ENCODE measurements at regions of chr7 and their contacts with region 1.

Region 1: DNA sequence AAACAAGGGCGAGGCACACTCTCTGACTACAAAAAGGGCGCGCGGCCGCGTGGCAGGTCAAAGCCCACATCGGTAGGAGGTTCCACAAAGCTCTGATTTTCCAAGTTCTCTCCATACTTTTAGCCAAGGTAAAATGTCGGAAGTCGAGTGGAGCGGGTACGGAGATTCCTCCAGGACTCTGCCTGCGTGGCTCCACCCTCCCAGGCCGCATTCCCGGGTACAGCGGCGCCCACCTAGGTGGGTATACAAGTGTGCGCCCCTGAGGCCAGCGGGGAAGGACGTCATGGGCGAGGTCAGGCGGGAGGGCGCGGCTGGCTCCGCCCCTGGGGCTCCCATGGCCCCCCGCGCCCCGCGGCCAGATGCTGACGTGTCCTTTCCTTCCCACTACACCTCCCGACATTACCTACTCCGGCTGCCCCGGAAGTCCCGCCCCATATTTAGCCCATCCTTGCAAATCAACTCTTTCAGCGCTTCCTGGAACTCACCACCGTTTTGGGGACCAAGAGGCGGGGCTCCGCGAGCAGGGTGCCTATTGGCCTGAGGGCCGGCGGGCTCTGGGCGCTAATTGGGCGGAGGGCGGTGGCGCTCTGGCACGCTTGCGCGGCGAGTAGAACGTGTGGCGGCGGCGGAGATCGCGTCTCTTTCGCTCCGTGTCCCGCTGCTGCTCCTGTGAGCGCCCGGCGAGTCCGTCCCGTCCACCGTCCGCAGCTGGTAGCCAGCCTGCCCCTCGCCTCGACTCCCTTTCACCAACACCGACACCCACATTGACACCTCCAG is at the start of gene SND1:
- DNase-seq: peak; percentile 96 to 98
- H3K4me3 ChIP-seq: peak within 1 kb of the TSS; percentile 87 to 99 (median 93)
- H3K27ac ChIP-seq: peak within 1 kb of the TSS; percentile 98
- H3K4me1 ChIP-seq: peaks cover 5 to 15% (median 8%) of the 10 kb centered on the region in 4 experiments; a peak in 6 of 7 replicates
- H3K27me3 ChIP-seq: no peaks in the 10 kb centered on the region
- CTCF ChIP-seq: no peak
- EP300 ChIP-seq: no peak
- POLR2A ChIP-seq: peak; percentile 92 to 95
- RAD21 ChIP-seq: no peak
- total RNA-seq, gene SND1: 259 and 290 TPM in 2 replicates

Region 2: DNA sequence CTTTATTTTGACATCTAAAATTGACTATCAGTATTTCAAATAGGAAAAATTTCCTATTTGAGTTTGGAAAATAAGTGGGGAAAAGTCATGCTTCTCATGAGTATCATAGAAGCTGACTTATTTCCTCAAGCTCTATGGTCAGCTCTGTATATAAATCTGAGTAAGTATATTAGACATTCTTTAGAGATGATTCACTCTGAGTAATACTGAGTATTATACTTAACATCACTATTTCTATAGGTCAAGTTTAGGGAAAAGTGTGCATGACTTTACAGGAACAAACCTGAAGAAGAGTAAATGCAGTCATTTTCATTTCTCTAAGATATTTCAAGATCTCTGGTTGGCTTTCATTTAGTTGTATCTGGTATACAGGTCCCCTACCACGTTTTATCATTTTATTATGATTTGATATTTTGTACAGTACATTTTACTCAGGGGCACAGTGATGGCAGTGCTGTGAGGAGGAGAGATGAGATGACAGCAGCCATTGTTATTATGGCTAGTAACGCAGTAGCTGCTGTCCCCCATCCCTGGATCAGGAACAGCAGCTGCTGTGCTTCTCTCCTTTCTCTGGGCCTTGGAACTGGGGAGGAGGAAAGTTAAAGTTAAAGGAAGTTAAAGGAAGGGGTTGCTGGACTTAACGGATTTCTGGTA is 15.4 kb after region 1 on chr7:
- CTCF ChIA-PET with region 1: interaction called, 5 read pairs
- POLR2A ChIA-PET with region 1: interaction called, 12 read pairs
- DNase-seq: no peak
- H3K4me3 ChIP-seq: no peak overlapping the region
- H3K27ac ChIP-seq: no peak overlapping the region
- H3K4me1 ChIP-seq: peaks cover 0 to 15% (median 7%) of the 10 kb centered on the region in 4 experiments; a peak in 5 of 7 replicates
- H3K27me3 ChIP-seq: no peaks in the 10 kb centered on the region
- CTCF ChIP-seq: no peak
- EP300 ChIP-seq: no peak
- POLR2A ChIP-seq: no peak
- RAD21 ChIP-seq: no peak

Region 3: GRCh38 chr7:127865466-127865865 is 213.7 kb after region 1 on chr7:
- CTCF ChIA-PET with region 1: no interaction called
- POLR2A ChIA-PET with region 1: no interaction called
- DNase-seq: no peak
- H3K4me3 ChIP-seq: no peak overlapping the region
- H3K27ac ChIP-seq: no peak overlapping the region
- H3K4me1 ChIP-seq: peaks cover 0 to 5% (median 2%) of the 10 kb centered on the region in 4 experiments; a peak in 3 of 7 replicates
- H3K27me3 ChIP-seq: no peaks in the 10 kb centered on the region
- CTCF ChIP-seq: no peak
- EP300 ChIP-seq: no peak
- POLR2A ChIP-seq: no peak
- RAD21 ChIP-seq: no peak